PC-9 (cell line): ENCODE measurements at regions of chr3 and their contacts with region 1.

Region 1: DNA sequence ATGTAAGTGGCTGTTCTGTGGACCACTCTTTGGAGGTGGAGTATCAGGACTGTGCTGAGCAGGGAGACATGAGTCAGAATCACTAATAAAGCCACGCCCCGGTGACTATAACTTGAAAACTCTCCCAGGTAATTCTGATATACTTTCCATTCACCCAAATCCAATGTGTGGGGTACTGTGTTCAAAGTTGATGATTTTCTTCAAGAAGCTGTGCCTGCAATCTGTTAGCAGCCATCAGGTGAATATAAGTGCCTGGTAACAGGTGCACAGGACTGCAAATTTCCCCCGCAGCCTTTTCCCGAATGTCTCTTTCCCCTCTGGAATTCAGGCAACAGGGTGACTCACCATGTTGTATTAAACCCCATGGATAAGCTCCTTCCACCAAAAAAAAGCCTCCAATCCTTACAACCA is 17.0 kb downstream of the MAGI1 start:
- DNase-seq: peak; percentile 36 to 69
- H3K4me3 ChIP-seq: peak overlapping the region; percentile 45; the same call in 1 of the 2 replicates
- H3K27ac ChIP-seq: peak overlapping the region; percentile 83
- H3K4me1 ChIP-seq: peaks cover 35% of the 10 kb centered on the region
- H3K27me3 ChIP-seq: no peaks in the 10 kb centered on the region
- CTCF ChIP-seq: no peak

Region 2: GRCh38 chr3:65500398-65501306 is 521.1 kb before region 1 on chr3:
- CTCF ChIA-PET with region 1: no interaction called
- POLR2A ChIA-PET with region 1: interaction called, 10 read pairs
- intact Hi-C with region 1: no loop called
- DNase-seq: no peak
- H3K4me3 ChIP-seq: no peak overlapping the region
- H3K27ac ChIP-seq: no peak overlapping the region
- H3K4me1 ChIP-seq: peaks cover 12% of the 10 kb centered on the region
- H3K27me3 ChIP-seq: no peaks in the 10 kb centered on the region
- CTCF ChIP-seq: no peak

Region 3: GRCh38 chr3:65922441-65922840 is 99.3 kb before region 1 on chr3:
- CTCF ChIA-PET with region 1: no interaction called
- POLR2A ChIA-PET with region 1: interaction called, 14 read pairs
- intact Hi-C with region 1: no loop called
- DNase-seq: no peak
- H3K4me3 ChIP-seq: no peak overlapping the region
- H3K27ac ChIP-seq: no peak overlapping the region
- H3K4me1 ChIP-seq: peaks cover 4% of the 10 kb centered on the region
- H3K27me3 ChIP-seq: no peaks in the 10 kb centered on the region
- CTCF ChIP-seq: no peak